Activated CD4-positive, alpha-beta T cell treated with anti-CD3 and anti-CD28 coated beads for 36 hours (primary cell): ENCODE measurements at regions of chr10 and their contacts with region 1.

Region 1: DNA sequence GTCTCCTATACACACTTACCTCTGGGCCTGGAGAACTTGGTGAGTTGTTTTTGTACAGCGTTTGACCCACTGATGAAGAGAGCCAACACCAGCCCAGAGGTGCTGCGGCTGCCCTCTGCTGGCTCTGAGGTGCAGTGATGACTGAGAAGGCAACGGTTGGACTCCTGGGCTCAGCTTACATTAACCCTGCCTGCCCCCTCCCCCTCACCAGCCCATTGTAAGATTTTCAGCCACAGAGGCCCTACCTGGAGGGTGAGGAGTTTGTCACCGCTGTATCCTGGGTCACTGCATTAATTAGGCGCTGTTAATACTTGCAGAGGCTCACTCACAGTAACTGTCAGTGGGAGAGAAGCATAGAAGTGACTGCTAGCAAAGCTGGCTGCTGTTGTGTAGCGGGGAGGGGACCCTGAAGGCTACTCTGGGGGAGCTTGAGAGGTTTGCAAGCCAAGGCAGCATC is 19.0 kb upstream of the ANKRD2 start:
- DNase-seq: peak; percentile 81
- ATAC-seq: peak; percentile 99
- H3K4me3 Mint-ChIP-seq: no peak overlapping the region
- H3K27ac Mint-ChIP-seq: no peak overlapping the region
- H3K4me1 Mint-ChIP-seq: no peaks in the 10 kb centered on the region
- H3K27me3 Mint-ChIP-seq: no peaks in the 10 kb centered on the region

Region 2: DNA sequence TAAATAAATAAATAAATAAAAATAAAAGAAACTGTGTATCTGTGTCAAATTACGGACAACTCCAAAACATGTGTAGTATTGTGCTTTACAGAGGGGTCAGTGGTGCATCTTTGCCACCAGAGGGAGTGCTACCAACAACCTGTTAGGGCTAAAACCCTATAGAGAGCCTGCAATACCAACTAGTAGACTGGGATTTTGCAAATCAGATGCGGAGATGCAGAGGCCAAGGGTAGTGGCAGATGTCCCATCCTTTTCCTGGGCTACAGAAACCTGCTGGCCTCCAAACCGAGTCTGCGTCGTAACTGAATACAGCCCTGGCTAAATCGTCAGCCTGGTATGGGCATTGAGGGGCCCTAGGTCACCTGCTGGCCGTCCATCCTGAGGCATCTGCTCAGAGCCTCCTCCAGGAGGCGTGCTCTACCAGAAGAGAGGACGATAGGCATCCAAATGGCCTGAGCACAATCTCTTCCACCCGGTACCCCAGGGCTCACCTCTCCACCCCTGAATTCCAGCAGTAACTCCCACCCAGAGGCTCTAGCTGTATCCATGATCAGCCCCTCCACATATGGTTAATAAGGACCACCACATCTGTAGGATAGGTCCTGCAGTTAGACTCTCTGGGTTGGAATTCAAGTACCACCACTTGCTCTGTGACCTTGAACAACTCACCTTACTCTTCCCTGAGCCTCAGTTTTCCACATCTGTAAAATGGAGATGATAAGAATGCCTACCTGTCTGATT is 146.2 kb before region 1 on chr10:
- CTCF ChIA-PET with region 1: interaction called, 11 read pairs
- POLR2A ChIA-PET with region 1: no interaction called
- intact Hi-C with region 1: loop called (anchors 1 kb)
- DNase-seq: peak; percentile 81
- ATAC-seq: peak; percentile 97
- H3K4me3 Mint-ChIP-seq: peak overlapping the region; percentile 47
- H3K27ac Mint-ChIP-seq: peak overlapping the region; percentile 56
- H3K4me1 Mint-ChIP-seq: peaks cover 11% of the 10 kb centered on the region
- H3K27me3 Mint-ChIP-seq: no peaks in the 10 kb centered on the region

Region 3: DNA sequence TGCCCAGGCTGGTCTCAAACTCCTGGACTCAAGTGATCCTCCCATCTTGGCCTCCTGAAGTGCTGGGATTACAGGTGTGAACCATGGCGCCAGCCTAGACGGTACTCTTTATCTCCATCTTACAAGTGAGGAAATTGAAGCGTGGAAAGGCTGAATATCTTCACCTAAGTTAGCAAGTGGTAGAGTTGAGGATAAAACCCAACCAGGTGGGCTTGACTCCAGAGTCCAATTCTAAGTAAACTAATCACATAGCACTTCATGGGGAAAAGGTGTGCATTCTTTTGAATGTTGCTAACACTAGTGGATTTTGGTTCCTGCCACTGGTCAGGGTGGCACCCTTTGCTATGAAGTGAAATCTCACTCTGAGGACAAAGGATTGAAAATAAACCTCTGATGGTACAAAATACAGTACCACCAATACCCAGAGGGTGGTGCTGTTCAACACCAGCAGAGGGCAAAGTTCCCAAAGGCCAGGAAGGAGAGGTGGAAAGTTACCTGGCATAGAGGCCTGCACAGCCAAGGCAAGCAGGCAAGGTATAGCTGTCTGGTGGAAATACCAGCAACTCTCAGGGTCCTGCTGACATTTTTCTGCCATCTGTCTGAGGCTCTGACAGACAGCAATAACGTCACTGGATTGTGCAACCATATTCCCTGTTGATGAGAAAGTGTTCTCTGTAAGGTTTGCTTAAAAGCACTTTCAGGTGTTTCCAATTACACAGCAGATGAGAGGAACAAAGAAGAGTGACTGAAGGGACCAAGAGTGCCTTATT is 90.1 kb before region 1 on chr10:
- CTCF ChIA-PET with region 1: interaction called, 27 read pairs
- POLR2A ChIA-PET with region 1: no interaction called
- intact Hi-C with region 1: loop called (anchors 1 kb)
- DNase-seq: peak; percentile 52
- ATAC-seq: peak; percentile 70
- H3K4me3 Mint-ChIP-seq: no peak overlapping the region
- H3K27ac Mint-ChIP-seq: no peak overlapping the region
- H3K4me1 Mint-ChIP-seq: no peaks in the 10 kb centered on the region
- H3K27me3 Mint-ChIP-seq: no peaks in the 10 kb centered on the region

Region 4: GRCh38 chr10:97534746-97535367 is 18.7 kb before region 1 on chr10:
- CTCF ChIA-PET with region 1: interaction called, 87 read pairs
- POLR2A ChIA-PET with region 1: no interaction called
- intact Hi-C with region 1: loop called (anchors 1 kb)
- DNase-seq: peak; percentile 73
- ATAC-seq: peak; percentile 87
- H3K4me3 Mint-ChIP-seq: no peak overlapping the region
- H3K27ac Mint-ChIP-seq: no peak overlapping the region
- H3K4me1 Mint-ChIP-seq: no peaks in the 10 kb centered on the region
- H3K27me3 Mint-ChIP-seq: no peaks in the 10 kb centered on the region

Region 5: DNA sequence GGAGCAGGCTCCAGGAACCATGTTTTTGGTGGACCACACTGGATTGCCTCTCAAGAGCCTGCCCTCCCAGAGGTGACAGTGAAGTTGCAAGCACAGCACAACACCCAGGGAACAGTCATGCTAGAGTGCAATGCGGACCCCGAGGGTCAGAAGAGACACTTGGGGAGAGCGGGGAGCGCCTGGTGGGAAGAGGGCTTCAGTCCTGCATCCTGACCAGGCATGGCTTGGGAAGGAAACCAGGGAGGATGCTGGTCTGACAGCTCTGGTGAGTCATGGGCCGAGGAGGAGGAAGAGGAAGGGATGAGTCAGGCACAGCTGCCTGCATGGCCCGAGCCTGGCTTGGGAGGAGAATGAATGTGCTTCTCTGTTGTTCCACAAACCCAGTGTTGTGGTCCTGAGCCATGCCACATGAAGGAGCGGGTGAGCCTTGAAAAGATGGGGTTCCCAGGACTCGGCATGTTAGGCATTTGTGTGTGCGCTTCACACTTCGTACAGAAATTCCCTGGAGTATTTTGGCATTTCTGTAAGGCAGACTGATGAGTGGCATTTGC is 10.5 kb before region 1 on chr10:
- CTCF ChIA-PET with region 1: interaction called, 87 read pairs
- POLR2A ChIA-PET with region 1: no interaction called
- intact Hi-C with region 1: no loop called
- DNase-seq: peak; percentile 85
- ATAC-seq: peak; percentile 94
- H3K4me3 Mint-ChIP-seq: no peak overlapping the region
- H3K27ac Mint-ChIP-seq: peak overlapping the region; percentile 75
- H3K4me1 Mint-ChIP-seq: peaks cover 22% of the 10 kb centered on the region
- H3K27me3 Mint-ChIP-seq: no peaks in the 10 kb centered on the region